ENCODE measurements at regions of chr16 and their contacts with region 1.

Region 1: GRCh38 chr16:89708441-89708931 is 7.0 kb upstream of the SPATA2L start:
- DNase-seq: peak in 1 of 5 donors; percentile 23
- ATAC-seq: peak in 3 of 4 donors; percentile 2 to 43 (median 31)
- H3K4me3 ChIP-seq: no peak overlapping the region
- H3K27ac ChIP-seq: no peak overlapping the region
- H3K4me1 ChIP-seq: peaks cover 0 to 21% (median 5%) of the 10 kb centered on the region in 12 donors
- H3K27me3 ChIP-seq: peaks cover 0 to 4% (median 0%) of the 10 kb centered on the region in 9 donors
- CTCF ChIP-seq: no peak
- POLR2A ChIP-seq: no peak

Region 2: DNA sequence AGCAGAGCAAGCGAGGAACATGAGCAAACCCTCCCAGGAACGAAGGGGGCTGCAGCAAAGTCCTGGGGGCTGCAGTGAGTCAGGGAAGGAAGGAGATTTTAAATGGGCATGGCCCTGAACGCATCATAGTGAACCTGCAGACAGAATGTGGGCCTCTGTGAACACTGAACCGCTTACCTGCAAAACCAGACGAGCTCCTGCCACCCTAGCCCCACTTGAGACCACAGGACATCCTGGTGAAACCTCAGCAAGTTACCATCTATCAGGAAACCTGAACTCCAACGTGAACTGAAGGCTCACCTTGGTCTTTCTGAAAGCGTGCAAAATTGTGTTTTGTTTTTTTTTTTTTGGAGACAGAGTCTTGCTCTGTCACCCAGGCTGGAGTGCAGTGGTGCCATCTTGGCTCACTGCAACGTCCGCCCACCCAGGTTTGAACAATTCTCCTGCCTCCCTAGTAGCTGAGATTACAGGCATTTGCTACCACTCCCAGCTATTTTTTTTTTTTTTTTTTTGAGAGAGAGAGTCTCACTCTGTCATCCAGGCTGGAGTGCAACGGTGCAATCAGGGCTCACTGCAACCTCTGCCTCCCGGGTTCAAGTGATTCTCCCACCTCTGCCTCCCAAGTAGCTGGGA is 77.2 kb after region 1 on chr16:
- intact Hi-C with region 1: loop called in 8 of 10 experiments (anchors 5 to 10 kb)
- DNase-seq: no peak
- ATAC-seq: no peak
- H3K4me3 ChIP-seq: no peak overlapping the region
- H3K27ac ChIP-seq: no peak overlapping the region
- H3K4me1 ChIP-seq: no peaks in the 10 kb centered on the region
- H3K27me3 ChIP-seq: no peaks in the 10 kb centered on the region
- CTCF ChIP-seq: no peak
- POLR2A ChIP-seq: no peak

Region 3: DNA sequence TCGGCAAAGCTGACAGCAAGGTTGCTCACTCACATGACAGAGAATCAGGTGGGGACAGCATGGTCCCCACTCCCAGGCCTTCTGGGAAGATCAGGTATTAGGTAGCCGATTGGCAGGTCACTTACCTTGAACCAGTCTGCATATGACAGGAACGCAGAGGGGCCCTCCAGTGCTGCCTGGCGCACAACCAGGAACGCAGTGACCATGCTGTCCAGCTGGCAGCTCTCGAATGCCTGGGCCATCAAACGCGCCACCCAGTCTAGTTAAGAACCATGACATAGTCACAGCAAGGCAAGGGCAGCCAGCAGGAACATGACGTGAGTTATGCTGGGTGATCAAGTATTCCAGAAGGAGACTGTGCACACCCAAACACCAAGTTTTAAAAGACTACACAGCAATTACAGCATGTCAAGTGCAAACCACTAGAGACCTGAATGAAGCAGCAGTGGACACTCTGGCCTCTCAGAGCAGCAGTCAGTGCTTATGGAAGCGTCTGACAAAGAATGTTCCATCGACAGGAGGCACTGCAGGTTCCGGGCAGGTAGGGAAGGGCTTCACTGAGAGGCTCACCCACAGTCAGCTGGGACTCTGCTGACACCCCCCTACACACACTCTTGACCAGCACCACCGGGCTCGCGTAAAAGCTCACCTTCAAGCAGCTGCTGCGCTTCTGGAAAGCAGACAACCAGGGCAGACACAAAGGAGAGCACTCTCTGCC is 83.0 kb after region 1 on chr16:
- intact Hi-C with region 1: loop called (anchors 2 to 10 kb)
- DNase-seq: no peak
- ATAC-seq: peak in 3 of 4 donors; percentile 22 to 47 (median 41)
- H3K4me3 ChIP-seq: no peak overlapping the region
- H3K27ac ChIP-seq: no peak overlapping the region
- H3K4me1 ChIP-seq: no peaks in the 10 kb centered on the region
- H3K27me3 ChIP-seq: no peaks in the 10 kb centered on the region
- CTCF ChIP-seq: no peak
- POLR2A ChIP-seq: no peak

Region 4: DNA sequence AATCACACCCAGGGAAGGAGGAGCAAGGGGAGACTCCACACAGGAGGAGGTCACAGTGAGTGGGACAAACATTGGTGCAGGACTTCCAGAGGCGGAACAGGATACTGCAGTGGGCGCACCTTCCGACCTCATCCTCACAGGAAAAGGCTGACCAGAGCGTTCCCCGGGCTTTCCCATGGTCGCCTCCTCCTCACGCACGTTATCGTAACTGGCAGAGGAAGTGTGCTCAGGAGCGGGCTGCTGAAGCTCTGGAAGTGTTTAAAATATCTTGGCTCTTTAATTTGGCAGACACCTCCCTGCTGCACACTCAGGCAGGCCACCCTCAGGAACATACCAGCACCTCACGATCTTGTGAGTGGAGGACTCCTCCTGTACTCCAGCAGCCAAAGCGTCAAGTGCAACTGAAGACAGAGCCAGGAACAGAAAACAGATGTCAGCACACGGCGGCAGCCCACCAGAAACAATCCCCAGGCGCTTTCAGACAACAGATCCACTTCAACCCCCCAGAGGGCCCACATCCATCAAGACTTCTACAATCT is 90.4 kb after region 1 on chr16:
- intact Hi-C with region 1: loop called in 8 of 10 experiments (anchors 2 to 10 kb)
- DNase-seq: peak in 4 of 5 donors; percentile 12 to 58 (median 39)
- ATAC-seq: peak; percentile 84 to 89 (median 86)
- H3K4me3 ChIP-seq: peak overlapping the region in 5 of 12 donors; percentile 8 to 29 (median 9)
- H3K27ac ChIP-seq: peak overlapping the region; percentile 4 to 73 (median 39)
- H3K4me1 ChIP-seq: peaks cover 0 to 15% (median 7%) of the 10 kb centered on the region in 12 donors
- H3K27me3 ChIP-seq: no peaks in the 10 kb centered on the region
- CTCF ChIP-seq: no peak
- POLR2A ChIP-seq: no peak

Measured in heart left ventricle (tissue), 16 donors.